ENCODE measurements at regions of chr10 and their contacts with region 1.

Region 1: DNA sequence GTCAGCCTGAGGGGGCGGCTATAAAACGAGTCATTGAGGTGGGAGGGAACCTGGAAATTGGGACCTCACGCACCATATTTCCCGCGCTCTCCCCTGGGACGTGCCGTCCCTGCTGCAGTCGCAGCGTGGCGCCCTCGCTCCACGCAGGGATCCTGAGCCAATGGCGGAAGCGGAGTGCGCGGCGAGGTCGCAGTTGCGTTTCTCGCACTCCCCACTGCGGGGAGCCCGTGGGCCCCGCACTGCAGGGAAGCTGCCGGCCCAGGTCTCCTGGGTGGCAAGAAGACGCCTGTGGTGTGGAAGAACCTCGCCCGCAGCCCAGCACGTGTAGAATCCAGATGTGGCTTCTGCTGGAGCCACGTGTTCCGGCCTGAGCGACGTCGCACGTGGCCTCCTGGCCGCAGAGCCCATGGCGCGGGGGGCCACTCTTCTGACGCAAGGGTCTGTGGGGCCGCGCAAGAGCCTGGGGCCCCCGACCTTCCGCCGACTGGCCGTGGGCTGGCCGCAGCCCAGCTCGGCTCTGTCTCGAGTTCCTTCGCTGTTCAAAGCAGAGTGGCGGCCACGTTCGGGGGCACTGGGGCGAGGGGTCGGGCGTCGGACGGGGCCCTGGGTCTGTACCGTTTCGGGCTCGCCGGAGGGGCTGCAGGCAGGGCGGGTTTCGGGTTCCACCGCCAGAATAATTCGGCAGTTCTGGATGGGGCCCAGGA is 26.4 kb downstream of the HIF1AN start:
- DNase-seq: peak; percentile 73
- ATAC-seq: peak; percentile 90

Region 2: GRCh38 chr10:100482834-100483185 is 79.3 kb before region 1 on chr10:
- intact Hi-C with region 1: no loop called
- DNase-seq: no peak
- ATAC-seq: no peak

Region 3: DNA sequence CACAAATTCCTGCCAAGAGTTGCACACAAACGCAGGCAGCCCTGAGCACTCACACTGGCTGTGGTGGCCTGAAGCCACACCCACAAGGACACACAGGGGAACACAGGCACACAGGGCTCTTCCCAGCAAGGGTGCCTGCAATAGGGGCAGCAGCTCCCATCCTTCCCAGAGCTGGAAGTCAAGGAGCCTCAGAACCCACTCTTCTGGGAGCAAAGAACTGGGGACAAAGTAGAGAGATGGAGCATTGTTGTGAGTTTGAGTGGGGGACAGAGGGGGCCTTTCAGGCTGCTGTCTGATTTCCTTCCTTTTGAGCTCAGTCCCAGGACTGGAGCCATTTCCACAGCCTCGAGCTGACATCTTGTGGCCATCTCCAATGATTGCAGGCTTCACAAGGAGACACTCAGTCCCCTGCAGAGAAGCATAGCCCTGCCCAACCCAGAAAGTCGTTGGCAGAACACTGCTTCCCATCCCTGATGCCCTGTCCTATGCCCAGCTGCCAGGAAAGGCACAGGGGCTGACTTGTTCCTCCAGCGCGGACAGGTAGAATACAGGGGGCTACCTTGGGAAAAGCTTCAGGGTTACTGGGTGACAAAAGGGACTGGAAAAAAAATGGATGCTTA is 316.2 kb after region 1 on chr10:
- intact Hi-C with region 1: loop called (anchors 10 kb)
- DNase-seq: no peak
- ATAC-seq: peak; percentile 86

Measured in Right ventricle myocardium superior (tissue), 1 donor.